G401 (cell line): ENCODE measurements at regions of chr11 and their contacts with region 1.

Region 1: GRCh38 chr11:67239783-67240575 is 26.3 kb upstream of the GRK2 start:
- DNase-seq: peak; percentile 99

Region 2: DNA sequence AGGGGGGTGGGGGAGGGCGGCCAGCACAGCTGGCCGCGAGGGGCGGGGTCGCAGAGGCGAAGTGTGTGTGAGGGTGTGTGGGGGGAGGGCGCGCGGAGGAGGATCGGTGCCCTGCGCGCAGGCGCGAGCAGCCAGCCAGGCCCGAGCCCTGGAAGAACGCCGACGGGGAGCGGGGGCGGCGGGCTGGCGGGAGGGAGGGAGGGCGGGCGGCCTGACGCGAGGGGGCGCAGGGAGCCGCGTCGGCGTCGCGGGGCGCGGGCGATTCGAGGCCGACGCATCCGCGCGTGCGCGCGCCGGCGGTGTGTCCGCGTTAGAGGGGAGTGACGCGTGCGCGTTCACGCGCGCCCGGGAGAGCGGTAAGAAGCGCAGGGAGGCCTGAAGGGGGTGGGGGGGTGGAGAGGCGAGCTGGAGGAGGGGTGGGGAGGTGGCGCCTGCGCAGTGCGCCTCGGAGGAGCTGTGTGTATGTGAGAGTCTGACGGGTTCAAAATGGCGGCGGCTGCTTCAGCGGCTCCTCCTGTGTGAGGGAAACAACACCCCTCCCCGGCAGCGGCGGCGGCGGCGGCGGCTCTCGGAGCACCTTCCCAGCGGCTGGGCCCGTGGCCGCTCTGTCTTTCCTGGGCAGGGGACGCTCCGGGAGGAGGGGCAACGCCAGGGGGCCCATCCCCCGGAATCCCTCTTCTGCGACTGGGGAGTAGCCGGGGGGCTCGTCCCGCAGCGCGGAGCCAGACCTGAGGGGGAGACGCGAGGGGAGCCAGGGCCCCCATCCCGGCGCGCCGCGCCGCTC is 121.0 kb before region 1 on chr11 and contains the start of gene KDM2A:
- in situ Hi-C with region 1: loop called (anchors 10 kb)
- DNase-seq: peak; percentile 98
- total RNA-seq, gene KDM2A: 11.4 and 13.4 TPM in 2 replicates